ENCODE measurements at regions of chr12 and their contacts with region 1.

Region 1: GRCh38 chr12:88299567-88300101 is 157.5 kb downstream of the TMTC3 start:
- DNase-seq: peak; percentile 46
- H3K4me3 Mint-ChIP-seq: no peak overlapping the region
- H3K27ac Mint-ChIP-seq: peak overlapping the region; percentile 90
- H3K4me1 Mint-ChIP-seq: peaks cover 48% of the 10 kb centered on the region
- H3K27me3 Mint-ChIP-seq: no peaks in the 10 kb centered on the region

Region 2: GRCh38 chr12:88062474-88062873 is 237.2 kb before region 1 on chr12:
- intact Hi-C with region 1: loop called (anchors 1 kb)
- DNase-seq: no peak
- H3K4me3 Mint-ChIP-seq: no peak overlapping the region
- H3K27ac Mint-ChIP-seq: no peak overlapping the region
- H3K4me1 Mint-ChIP-seq: peaks cover 19% of the 10 kb centered on the region
- H3K27me3 Mint-ChIP-seq: no peaks in the 10 kb centered on the region

Region 3: DNA sequence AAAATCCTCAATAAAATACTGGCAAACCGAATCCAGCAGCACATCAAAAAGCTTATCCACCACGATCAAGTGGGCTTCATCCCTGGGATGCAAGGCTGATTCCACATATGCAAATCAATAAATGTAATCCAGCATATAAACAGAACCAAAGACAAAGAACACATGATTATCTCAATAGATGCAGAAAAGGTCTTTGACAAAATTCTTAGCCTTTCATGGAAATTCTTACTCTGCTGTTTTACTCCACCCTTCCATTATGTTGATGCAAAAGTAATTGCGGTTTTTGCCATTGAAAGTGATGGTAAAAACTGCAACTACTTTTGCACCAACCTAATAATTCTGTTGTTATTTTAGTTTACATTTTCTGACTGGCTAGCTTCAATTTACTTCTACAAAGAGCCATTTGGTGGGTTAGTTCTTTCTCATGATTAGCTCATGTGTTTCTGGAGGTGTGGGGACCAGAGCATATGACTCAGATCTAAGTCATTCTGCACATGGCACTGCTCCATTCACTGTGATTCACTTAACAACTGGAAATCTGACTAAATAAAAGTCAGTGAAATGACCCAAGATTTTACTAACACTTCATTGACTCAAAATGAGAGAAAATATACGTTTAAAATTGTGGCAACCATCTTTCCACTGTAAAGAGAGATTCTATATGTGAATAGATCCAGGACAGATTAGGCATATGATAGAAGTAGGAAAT is 57.6 kb before region 1 on chr12:
- intact Hi-C with region 1: loop called (anchors 1 kb)
- DNase-seq: no peak
- H3K4me3 Mint-ChIP-seq: no peak overlapping the region
- H3K27ac Mint-ChIP-seq: peak overlapping the region; percentile 93
- H3K4me1 Mint-ChIP-seq: peaks cover 42% of the 10 kb centered on the region
- H3K27me3 Mint-ChIP-seq: no peaks in the 10 kb centered on the region

Region 4: DNA sequence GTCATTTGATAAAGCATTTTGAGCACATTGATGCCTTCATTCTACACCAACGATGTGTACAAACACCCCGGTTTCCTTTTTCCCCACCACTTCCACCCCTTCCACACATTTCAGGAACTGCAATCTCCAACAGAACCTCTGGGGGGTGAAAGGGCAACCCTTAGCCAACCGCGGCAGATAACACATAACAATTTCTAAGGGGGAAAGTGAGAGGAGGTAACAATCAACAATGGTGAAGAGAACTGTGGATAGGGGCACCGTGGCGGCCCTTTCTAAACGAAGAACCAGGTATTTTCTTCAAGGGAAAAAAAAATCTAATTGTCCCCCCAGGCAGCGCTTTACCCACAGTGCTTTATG is 279.5 kb after region 1 on chr12:
- intact Hi-C with region 1: loop called (anchors 5 kb)
- DNase-seq: no peak
- H3K4me3 Mint-ChIP-seq: peak overlapping the region; percentile 67
- H3K27ac Mint-ChIP-seq: no peak overlapping the region
- H3K4me1 Mint-ChIP-seq: peaks cover 7% of the 10 kb centered on the region
- H3K27me3 Mint-ChIP-seq: peaks cover 59% of the 10 kb centered on the region

Region 5: DNA sequence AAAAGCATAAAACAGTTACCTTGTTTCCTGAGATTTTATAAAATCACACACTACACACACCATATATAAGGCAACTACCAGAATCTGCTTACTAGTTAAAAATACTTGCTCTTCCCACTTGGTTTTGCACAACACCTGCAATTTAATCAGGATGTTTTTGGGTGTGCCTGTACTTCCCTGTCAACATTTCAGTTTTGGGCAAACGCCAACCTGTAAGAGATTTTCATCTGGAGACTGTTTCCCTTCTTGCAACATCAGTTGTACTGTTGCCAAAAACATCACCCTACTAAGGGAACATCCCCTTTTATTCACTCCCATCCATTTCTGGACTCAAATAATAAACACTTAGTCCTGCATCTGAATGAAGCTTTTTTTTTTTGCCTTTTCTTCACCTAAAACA is 880.3 kb after region 1 on chr12:
- intact Hi-C with region 1: loop called (anchors 2 kb)
- DNase-seq: no peak
- H3K4me3 Mint-ChIP-seq: peak overlapping the region; percentile 50
- H3K27ac Mint-ChIP-seq: peak overlapping the region; percentile 86
- H3K4me1 Mint-ChIP-seq: peaks cover 71% of the 10 kb centered on the region
- H3K27me3 Mint-ChIP-seq: no peaks in the 10 kb centered on the region

Region 6: DNA sequence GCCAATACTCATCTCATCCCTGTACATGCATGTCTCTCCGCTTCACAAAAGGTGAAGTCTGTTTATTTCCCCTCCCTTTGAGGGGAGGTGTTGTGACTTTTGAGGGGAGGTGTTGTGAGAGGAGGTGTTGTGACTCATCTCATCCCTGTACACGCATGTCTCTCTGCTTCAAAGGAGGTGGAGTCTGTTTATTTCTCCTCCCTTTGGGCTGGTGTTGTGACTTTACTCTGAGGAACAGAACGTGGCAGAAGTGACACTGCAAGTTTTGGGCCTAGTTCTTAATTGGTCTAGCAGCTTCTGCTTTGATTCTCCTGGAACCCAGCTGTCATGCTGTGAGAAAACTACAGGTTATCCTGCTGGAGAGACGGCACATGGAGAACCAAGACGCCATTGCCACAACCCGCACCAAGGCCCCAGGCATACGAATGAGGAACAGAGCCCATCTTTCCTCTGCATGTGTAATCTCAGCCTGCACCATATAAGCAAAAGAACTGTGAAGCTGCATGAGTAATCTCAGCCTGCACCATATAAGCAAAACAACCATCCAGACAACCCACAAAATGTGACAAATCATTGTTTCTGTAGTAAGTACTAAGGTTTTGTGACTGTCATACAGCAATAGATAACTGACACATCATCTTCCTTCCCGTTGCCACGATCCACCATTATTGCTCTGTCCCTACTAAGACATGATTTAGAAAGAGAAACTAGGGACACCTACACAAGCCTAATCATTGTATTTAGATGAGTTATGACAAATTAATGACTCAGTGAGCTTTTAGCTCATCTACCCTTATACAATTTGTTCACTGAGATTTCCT is 1195.0 kb after region 1 on chr12:
- intact Hi-C with region 1: loop called (anchors 10 kb)
- DNase-seq: no peak
- H3K4me3 Mint-ChIP-seq: peak overlapping the region; percentile 9
- H3K27ac Mint-ChIP-seq: peak overlapping the region; percentile 90
- H3K4me1 Mint-ChIP-seq: peaks cover 17% of the 10 kb centered on the region
- H3K27me3 Mint-ChIP-seq: no peaks in the 10 kb centered on the region

Measured in activated T-helper 2 cell treated with anti-CD3 and anti-CD28 coated beads, Interferon-gamma antibody, Interleukin-2, Interleukin-4, amounts not matched to agents 10 μg/mL and 5 μg/mL and 100 μg/mL, durations not matched to agents 14 hours and 24 hours and 36 hours (primary cell).